ENCODE measurements at regions of chr17 and their contacts with region 1.

Region 1: DNA sequence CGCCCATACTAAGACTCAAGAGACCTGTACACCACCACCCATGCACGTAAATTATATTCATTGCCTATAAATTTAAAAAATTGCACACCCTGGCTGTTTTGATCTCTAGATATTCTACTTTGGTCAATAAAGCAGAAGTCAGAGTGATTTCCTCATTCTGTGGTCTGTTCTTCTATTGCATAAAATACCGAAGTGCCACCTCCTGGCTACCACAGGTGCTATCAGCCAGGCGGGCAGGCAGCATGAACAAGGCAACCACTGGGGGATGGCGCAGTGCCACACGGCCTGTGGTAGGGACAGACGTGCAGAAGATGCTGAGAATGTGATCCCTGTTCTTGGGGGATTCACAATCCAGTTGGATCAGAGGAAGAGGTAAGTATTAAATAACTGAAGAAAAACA is 122.3 kb downstream of the CDK5R1 start:
- DNase-seq: peak; percentile 55 to 65 (median 65)
- H3K4me3 ChIP-seq: no peak overlapping the region
- H3K4me3 Mint-ChIP-seq: peak overlapping the region; percentile 1 to 10
- H3K27ac ChIP-seq: no peak overlapping the region
- H3K27ac Mint-ChIP-seq: no peak overlapping the region
- H3K4me1 ChIP-seq: peaks cover 7 to 8% of the 10 kb centered on the region in 2 donors
- H3K4me1 Mint-ChIP-seq: peaks cover 9% of the 10 kb centered on the region
- H3K27me3 ChIP-seq: peaks cover 0 to 3% of the 10 kb centered on the region in 2 donors
- H3K27me3 Mint-ChIP-seq: peaks cover 9 to 17% (median 15%) of the 10 kb centered on the region in 3 donors
- CTCF ChIP-seq: peak; percentile 55

Region 2: DNA sequence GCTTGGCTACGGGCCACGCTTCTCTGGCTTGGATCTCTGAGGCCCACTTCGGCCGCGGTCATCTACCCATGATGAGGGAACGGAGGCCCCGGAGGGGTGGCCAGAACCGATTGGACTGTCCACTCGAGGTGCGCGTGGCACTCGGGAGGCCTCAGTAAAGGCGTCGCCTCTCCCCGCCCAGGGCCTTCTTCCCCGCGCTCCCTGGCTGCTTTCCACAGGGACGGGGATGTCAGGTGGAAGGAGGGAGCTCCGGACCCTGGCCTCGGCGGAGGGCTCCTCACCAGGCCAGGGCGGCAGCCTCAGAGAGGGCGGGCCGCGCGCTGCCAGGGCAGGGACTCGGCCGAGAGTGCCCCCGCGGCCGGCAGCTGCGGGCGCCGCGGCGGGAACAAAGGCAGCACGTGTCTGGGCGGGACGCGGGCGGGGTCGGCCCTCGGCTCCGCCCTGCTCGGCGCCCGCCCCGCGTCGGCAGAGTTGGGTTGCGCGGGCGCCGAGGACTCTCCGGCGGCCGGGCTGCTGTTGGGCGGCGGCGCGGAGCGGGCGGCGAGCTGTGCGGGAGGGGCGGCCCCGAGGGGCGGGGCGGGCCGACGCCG is 122.9 kb before region 1 on chr17:
- intact Hi-C with region 1: loop called (anchors 5 kb)
- DNase-seq: peak; percentile 35 to 63 (median 55)
- H3K4me3 ChIP-seq: peak overlapping the region; percentile 8 to 63 (median 43)
- H3K4me3 Mint-ChIP-seq: peak overlapping the region; percentile 65 to 76
- H3K27ac ChIP-seq: no peak overlapping the region
- H3K27ac Mint-ChIP-seq: no peak overlapping the region
- H3K4me1 ChIP-seq: peaks cover 36 to 42% of the 10 kb centered on the region in 2 donors
- H3K4me1 Mint-ChIP-seq: peaks cover 39% of the 10 kb centered on the region
- H3K27me3 ChIP-seq: peaks cover 0 to 3% of the 10 kb centered on the region in 2 donors
- H3K27me3 Mint-ChIP-seq: peaks cover 0 to 9% (median 6%) of the 10 kb centered on the region in 3 donors
- CTCF ChIP-seq: no peak